ENCODE measurements at regions of chr21 and their contacts with region 1.

Region 1: GRCh38 chr21:35840197-35840799 is 220.0 kb downstream of the SETD4 start:
- DNase-seq: peak; percentile 72
- H3K4me3 Mint-ChIP-seq: no peak overlapping the region
- H3K27ac Mint-ChIP-seq: no peak overlapping the region
- H3K4me1 Mint-ChIP-seq: no peaks in the 10 kb centered on the region
- H3K27me3 Mint-ChIP-seq: no peaks in the 10 kb centered on the region
- CTCF ChIP-seq: peak; percentile 78

Region 2: DNA sequence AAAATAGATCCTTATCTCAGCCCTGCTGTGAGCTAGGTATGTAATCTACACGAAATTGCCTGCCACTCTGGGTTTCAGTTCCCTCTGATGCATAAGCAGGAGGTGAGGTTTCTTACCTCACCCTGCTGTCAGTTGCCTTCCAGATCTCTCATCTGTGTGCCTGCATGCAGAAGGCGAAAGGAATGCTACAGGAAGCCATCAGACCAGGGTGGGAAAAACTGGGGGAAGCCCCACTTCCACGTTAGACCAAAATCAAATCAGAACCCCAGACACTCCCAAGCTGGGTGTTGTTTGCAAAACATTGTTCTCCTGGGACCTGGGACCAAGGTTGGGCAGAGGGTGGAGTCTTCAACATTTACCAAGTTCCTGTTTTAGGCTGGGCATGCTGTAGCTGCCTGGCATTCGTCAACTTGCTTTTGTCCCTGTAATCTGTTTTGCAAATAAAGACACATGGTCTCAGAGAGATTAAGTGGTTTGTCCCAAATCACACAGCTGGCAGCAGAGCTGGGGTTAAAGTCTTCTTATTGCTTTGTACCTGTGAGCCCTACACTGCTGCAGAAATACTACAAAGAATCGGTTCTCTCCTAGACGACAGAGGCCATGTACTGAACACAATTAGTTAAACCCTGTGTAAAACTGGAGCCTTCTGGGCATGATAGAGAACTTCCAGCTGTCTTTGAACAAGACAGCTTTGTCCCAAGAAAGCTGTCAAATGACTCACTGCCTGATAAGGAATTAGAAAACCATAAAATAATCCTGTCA is 401.5 kb before region 1 on chr21:
- CTCF ChIA-PET with region 1: no interaction called
- POLR2A ChIA-PET with region 1: no interaction called
- intact Hi-C with region 1: loop called (anchors 10 kb)
- DNase-seq: no peak
- H3K4me3 Mint-ChIP-seq: no peak overlapping the region
- H3K27ac Mint-ChIP-seq: no peak overlapping the region
- H3K4me1 Mint-ChIP-seq: no peaks in the 10 kb centered on the region
- H3K27me3 Mint-ChIP-seq: peaks cover 77% of the 10 kb centered on the region
- CTCF ChIP-seq: no peak

Region 3: GRCh38 chr21:35940074-35940927 is 100.0 kb after region 1 on chr21:
- CTCF ChIA-PET with region 1: interaction called, 8 read pairs
- POLR2A ChIA-PET with region 1: no interaction called
- intact Hi-C with region 1: loop called (anchors 1 kb)
- DNase-seq: peak; percentile 74
- H3K4me3 Mint-ChIP-seq: no peak overlapping the region
- H3K27ac Mint-ChIP-seq: no peak overlapping the region
- H3K4me1 Mint-ChIP-seq: no peaks in the 10 kb centered on the region
- H3K27me3 Mint-ChIP-seq: no peaks in the 10 kb centered on the region
- CTCF ChIP-seq: peak; percentile 66

Region 4: GRCh38 chr21:36028127-36029069 is 188.1 kb after region 1 on chr21:
- CTCF ChIA-PET with region 1: interaction called, 5 read pairs
- POLR2A ChIA-PET with region 1: no interaction called
- intact Hi-C with region 1: loop called (anchors 1 kb)
- DNase-seq: peak; percentile 70
- H3K4me3 Mint-ChIP-seq: no peak overlapping the region
- H3K27ac Mint-ChIP-seq: no peak overlapping the region
- H3K4me1 Mint-ChIP-seq: peaks cover 7% of the 10 kb centered on the region
- H3K27me3 Mint-ChIP-seq: no peaks in the 10 kb centered on the region
- CTCF ChIP-seq: peak; percentile 93

Region 5: DNA sequence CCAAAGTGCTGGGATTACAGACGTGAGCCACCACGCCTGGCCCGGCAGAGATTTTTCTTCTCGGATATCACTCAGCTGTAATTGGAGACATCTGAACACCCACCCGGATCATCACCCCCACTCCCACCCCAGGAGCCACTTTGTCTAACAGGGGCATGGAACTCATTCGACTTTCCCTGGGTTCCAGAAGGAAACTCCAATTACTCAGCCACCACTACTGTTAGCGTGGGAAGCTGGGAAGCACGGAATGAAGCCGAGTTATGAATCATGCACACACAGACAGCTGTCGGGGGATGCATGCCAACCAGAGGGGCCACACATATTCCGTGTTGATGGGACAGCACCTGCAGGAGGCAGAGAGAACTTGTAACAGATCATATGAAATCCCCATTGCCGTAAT is 1040.9 kb after region 1 on chr21:
- CTCF ChIA-PET with region 1: no interaction called
- POLR2A ChIA-PET with region 1: no interaction called
- intact Hi-C with region 1: no loop called
- DNase-seq: no peak
- H3K4me3 Mint-ChIP-seq: no peak overlapping the region
- H3K27ac Mint-ChIP-seq: no peak overlapping the region
- H3K4me1 Mint-ChIP-seq: no peaks in the 10 kb centered on the region
- H3K27me3 Mint-ChIP-seq: no peaks in the 10 kb centered on the region
- CTCF ChIP-seq: no peak

Measured in MCF 10A (cell line).